HepG2 (cell line): ENCODE measurements at regions of chr20 and their contacts with region 1.

Region 1: GRCh38 chr20:38645980-38646858 is 44.6 kb downstream of the ARHGAP40 start:
- DNase-seq: peak; percentile 71
- ATAC-seq: peak; percentile 87
- H3K4me3 ChIP-seq: peak overlapping the region in 1 of 3 experiments; percentile 42; a peak in 1 of 6 replicates
- H3K27ac ChIP-seq: no peak overlapping the region
- H3K4me1 ChIP-seq: peaks cover 25% of the 10 kb centered on the region
- H3K27me3 ChIP-seq: peaks cover 2 to 17% of the 10 kb centered on the region in 2 experiments; a peak in 3 of 5 replicates
- CTCF ChIP-seq: peak; percentile 100
- EP300 ChIP-seq: peak in 1 of 2 experiments; percentile 64; a peak in 1 of 4 replicates
- POLR2A ChIP-seq: no peak
- RAD21 ChIP-seq: peak; percentile 99

Region 2: GRCh38 chr20:38485041-38485440 is 161.2 kb before region 1 on chr20:
- CTCF ChIA-PET with region 1: no interaction called
- POLR2A ChIA-PET with region 1: no interaction called
- in situ Hi-C with region 1: no loop called
- intact Hi-C with region 1: no loop called
- DNase-seq: no peak
- ATAC-seq: no peak
- H3K4me3 ChIP-seq: no peak overlapping the region
- H3K27ac ChIP-seq: no peak overlapping the region
- H3K4me1 ChIP-seq: no peaks in the 10 kb centered on the region
- H3K27me3 ChIP-seq: no peaks in the 10 kb centered on the region
- CTCF ChIP-seq: no peak
- EP300 ChIP-seq: no peak
- POLR2A ChIP-seq: no peak
- RAD21 ChIP-seq: no peak

Region 3: DNA sequence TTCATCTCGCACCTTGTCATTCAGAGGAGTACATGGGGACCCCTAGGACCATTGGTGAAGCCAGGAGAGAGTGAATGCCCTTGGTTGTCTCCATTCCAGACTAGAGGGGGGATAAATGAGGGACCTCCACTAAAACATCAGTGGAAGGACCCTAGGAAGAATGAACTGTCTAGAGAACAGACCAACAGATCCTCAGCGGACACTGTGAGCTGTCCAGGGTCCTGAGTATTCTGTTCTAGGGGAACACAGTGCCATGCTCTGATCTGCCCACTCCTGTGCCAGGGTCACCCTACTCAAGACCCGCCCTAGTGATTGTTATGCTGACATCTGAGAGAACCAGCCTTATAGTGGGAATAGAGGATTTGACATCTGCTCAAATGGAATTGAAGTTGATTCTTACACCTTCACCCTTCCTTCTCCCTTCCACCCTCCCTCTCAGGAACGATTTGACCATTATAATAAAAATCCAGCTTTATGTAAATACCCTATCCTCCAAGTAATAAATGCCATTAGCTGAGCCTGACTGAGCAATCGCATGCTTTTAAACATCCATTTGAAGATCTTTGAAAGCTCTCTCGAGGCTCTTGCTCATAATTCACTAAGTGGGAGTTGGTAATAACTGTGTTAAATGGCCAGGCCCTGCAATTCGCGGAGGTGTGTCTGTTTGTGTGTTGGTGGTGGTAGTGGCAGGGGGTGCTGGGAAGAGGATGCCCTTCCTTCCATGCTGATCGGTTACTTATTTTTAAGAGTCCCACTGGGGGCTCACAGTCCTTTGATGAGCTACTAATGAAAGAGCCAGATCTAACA is 34.5 kb after region 1 on chr20:
- CTCF ChIA-PET with region 1: no interaction called
- POLR2A ChIA-PET with region 1: no interaction called
- in situ Hi-C with region 1: no loop called
- intact Hi-C with region 1: loop called (anchors 1 kb)
- DNase-seq: peak; percentile 45
- ATAC-seq: peak; percentile 88
- H3K4me3 ChIP-seq: no peak overlapping the region
- H3K27ac ChIP-seq: no peak overlapping the region
- H3K4me1 ChIP-seq: no peaks in the 10 kb centered on the region
- H3K27me3 ChIP-seq: no peaks in the 10 kb centered on the region
- CTCF ChIP-seq: no peak
- EP300 ChIP-seq: no peak
- POLR2A ChIP-seq: no peak
- RAD21 ChIP-seq: no peak

Region 4: DNA sequence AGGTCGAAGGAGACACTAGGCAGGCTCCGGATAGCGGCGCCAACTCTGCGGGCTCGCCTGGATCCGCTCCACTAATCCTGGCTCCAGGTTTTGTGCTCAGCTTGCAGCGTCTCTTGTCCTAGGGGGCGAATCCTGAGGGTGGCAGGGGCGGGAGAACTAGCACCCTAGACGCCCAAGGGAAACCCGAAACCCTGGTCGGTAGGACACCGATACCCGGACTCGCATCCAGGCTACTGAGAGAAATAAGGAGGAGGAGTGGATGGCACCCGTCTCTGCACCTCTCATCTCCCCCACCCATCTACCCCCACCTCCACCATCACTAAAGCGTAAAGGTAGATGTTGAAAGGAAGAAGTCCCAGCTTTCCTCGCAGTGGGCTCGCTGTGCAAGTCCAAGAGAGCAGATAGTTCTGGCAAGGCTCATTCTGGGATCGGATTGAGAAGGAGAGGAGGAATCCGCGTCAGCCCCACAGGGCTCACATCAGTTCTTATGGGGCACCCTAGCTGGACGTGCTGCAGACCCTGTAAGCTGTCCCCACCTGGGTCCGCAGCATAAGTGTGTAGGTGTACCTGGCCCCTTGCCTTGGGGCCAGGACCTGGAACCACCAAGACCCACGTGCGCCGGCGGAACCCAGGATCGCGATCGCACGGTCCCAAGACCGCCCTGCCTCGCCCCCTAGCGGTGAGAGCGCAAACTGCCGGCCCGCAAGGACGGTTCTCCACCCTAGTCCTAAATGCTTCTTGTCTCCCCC is 84.9 kb after region 1 on chr20:
- CTCF ChIA-PET with region 1: interaction called, 34 read pairs
- POLR2A ChIA-PET with region 1: no interaction called
- in situ Hi-C with region 1: loop called (anchors 5 kb)
- intact Hi-C with region 1: loop called (anchors 1 kb)
- DNase-seq: peak; percentile 62
- ATAC-seq: peak; percentile 85
- H3K4me3 ChIP-seq: peak overlapping the region; percentile 10 to 71 (median 33)
- H3K27ac ChIP-seq: no peak overlapping the region
- H3K4me1 ChIP-seq: peaks cover 15% of the 10 kb centered on the region
- H3K27me3 ChIP-seq: peaks cover 35 to 82% of the 10 kb centered on the region in 2 experiments
- CTCF ChIP-seq: peak; percentile 99
- EP300 ChIP-seq: 0 out of 4 replicates have a peak, but pooled peaks of 1 of the 2 experiments have one; percentile 30
- POLR2A ChIP-seq: no peak
- RAD21 ChIP-seq: peak; percentile 82